OCI-LY7 (cell line): ENCODE measurements at regions of chr5 and their contacts with region 1.

Region 1: DNA sequence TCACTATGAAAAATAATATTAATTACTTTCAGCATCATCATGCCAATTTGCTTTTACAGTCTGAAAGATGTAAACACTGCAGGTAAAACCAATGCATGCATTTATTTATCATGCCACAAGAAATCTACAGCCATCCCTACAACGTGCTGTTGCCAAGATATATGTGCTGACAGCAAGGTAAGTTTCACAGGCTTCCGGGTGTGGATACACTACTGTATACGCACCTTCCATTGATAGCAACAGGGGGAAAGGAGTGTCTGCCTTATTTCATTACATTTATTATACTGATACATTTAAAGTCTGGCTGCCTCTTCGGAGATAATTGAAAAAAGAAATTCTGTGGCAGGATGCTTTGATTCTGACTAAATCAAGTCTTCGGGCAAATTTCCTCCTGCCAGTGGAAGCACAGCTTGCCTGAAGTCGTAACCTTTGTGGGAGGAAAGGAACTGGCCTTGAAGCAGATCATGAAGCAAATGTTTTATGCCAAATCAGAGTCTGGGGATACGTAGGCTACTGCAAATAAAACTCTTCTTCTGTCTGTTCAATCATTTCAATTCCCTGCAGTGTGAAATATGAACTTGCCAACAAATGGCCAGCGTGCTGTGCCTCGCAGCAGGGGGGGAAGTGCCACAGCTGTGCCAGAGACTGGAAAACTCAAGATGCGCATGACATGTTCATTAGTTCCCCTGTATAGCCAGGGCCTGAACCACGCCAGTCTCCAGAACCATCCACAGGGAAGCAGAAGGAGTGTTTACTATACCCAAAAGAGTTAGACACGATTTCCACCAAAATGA is 268.1 kb downstream of the EFNA5 start:
- DNase-seq: no peak
- H3K4me3 ChIP-seq: no peak overlapping the region
- H3K27ac ChIP-seq: no peak overlapping the region
- H3K4me1 ChIP-seq: peaks cover 12% of the 10 kb centered on the region
- CTCF ChIP-seq: no peak

Region 2: GRCh38 chr5:107104040-107104995 is 298.3 kb before region 1 on chr5:
- CTCF ChIA-PET with region 1: no interaction called
- POLR2A ChIA-PET with region 1: no interaction called
- intact Hi-C with region 1: no loop called
- DNase-seq: peak; percentile 75
- H3K4me3 ChIP-seq: no peak overlapping the region
- H3K27ac ChIP-seq: no peak overlapping the region
- H3K4me1 ChIP-seq: peaks cover 6% of the 10 kb centered on the region
- CTCF ChIP-seq: peak; percentile 78

Region 3: GRCh38 chr5:107415762-107416161 is 13.1 kb after region 1 on chr5:
- CTCF ChIA-PET with region 1: no interaction called
- POLR2A ChIA-PET with region 1: interaction called, 14 read pairs
- intact Hi-C with region 1: no loop called
- DNase-seq: no peak
- H3K4me3 ChIP-seq: no peak overlapping the region
- H3K27ac ChIP-seq: no peak overlapping the region
- H3K4me1 ChIP-seq: peaks cover 27% of the 10 kb centered on the region
- CTCF ChIP-seq: no peak

Region 4: GRCh38 chr5:107812570-107813141 is 410.0 kb after region 1 on chr5:
- CTCF ChIA-PET with region 1: no interaction called
- POLR2A ChIA-PET with region 1: no interaction called
- intact Hi-C with region 1: no loop called
- DNase-seq: no peak
- H3K4me3 ChIP-seq: no peak overlapping the region
- H3K27ac ChIP-seq: no peak overlapping the region
- H3K4me1 ChIP-seq: no peaks in the 10 kb centered on the region
- CTCF ChIP-seq: no peak